ENCODE measurements at regions of chr12 and their contacts with region 1.

Region 1: DNA sequence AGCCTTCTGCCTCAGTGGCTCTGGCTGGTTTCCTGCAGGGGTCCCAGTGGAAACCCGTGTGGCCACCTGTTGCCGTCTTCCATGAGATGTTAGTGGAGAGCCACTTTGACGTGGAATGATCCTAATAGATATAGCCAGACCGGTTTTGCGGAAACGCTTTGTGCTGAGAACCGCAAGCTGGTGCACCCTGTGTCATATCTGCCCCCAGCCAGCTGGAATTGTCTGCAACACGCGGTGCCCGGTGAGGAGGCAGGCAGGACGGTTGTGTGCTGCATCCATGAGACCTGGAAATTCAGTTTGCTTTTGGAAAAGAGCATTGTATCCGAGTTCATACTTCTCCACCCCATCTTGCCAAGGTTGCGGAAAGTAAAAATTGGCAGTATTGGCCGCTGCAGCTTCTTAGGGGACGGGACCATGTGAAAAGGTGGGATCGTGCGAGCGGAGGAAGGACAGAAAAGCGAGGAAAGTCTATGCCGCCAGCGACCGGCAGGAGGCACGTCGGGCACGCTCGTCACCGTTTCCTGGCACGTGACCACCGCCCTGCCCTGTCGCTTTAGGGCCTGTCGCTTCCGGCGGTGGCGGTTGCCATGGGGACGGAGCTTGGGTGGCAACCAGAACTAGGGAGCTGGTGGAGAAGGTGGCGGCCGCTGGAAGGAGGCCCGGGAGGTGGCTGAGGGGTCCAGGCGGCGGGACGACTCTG is at the start of gene CFAP251:
- DNase-seq: peak; percentile 95 to 97 (median 97)
- H3K4me3 ChIP-seq: peak within 1 kb of the TSS in 6 of 7 experiments; percentile 48 to 72 (median 50)
- H3K27ac ChIP-seq: peak within 1 kb of the TSS; percentile 7 to 61
- H3K4me1 ChIP-seq: peaks cover 0 to 13% (median 12%) of the 10 kb centered on the region in 4 experiments
- H3K27me3 ChIP-seq: no peaks in the 10 kb centered on the region

Region 2: DNA sequence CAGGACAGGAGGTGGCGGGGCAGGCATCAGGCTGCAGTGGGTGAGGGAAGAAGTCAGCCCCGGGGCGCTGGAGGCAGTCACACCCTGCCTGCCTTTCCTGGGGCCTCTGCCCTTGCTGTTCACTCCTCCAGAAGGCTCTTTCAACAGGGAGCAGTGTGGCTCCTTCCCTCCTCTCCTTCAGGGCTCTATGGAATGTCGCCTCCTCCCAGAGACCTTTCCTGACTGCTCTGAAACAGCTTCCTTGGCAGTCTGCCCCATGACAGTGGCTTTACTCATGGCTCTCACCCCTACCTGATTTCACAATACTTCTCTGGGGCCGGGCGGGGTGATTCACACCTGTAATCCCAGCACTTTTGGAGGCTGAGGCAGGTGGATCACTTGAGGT is 131.7 kb before region 1 on chr12:
- CTCF ChIA-PET with region 1: no interaction called
- POLR2A ChIA-PET with region 1: no interaction called
- DNase-seq: no peak
- H3K4me3 ChIP-seq: no peak overlapping the region
- H3K27ac ChIP-seq: no peak overlapping the region
- H3K4me1 ChIP-seq: peaks cover 5 to 69% (median 65%) of the 10 kb centered on the region in 4 experiments
- H3K27me3 ChIP-seq: no peaks in the 10 kb centered on the region

Region 3: DNA sequence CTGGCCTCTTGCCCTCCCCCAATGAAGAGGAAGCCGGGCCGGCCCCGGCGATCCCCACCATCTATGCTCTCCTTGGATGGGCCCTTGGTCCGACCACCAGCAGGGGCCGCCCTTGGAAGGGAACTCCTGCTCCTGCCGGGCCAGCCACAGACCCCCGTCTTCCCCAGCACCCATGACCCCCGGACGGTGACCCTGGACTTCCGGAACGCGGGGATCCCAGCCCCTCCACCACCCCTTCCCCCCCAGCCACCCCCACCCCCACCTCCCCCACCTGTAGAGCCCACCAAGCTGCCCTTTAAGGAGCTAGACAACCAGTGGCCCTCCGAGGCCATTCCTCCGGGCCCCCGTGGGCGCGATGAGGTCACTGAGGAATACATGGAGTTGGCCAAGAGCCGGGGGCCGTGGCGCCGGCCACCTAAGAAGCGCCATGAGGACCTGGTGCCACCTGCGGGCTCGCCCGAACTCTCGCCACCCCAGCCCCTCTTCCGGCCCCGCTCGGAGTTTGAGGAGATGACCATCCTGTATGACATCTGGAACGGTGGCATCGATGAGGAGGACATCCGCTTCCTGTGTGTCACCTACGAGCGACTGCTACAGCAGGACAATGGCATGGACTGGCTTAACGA is 94.9 kb before region 1 on chr12:
- CTCF ChIA-PET with region 1: no interaction called
- POLR2A ChIA-PET with region 1: no interaction called
- DNase-seq: no peak
- H3K4me3 ChIP-seq: no peak overlapping the region
- H3K27ac ChIP-seq: no peak overlapping the region
- H3K4me1 ChIP-seq: no peaks in the 10 kb centered on the region
- H3K27me3 ChIP-seq: no peaks in the 10 kb centered on the region

Region 4: GRCh38 chr12:121992059-121992879 is 74.1 kb after region 1 on chr12:
- CTCF ChIA-PET with region 1: interaction called, 18 read pairs
- POLR2A ChIA-PET with region 1: no interaction called
- DNase-seq: peak; percentile 83 to 96 (median 94)
- H3K4me3 ChIP-seq: peak overlapping the region in 1 of 7 experiments; percentile 26
- H3K27ac ChIP-seq: peak overlapping the region; percentile 9 to 52
- H3K4me1 ChIP-seq: peaks cover 0 to 25% (median 21%) of the 10 kb centered on the region in 4 experiments
- H3K27me3 ChIP-seq: no peaks in the 10 kb centered on the region

Region 5: GRCh38 chr12:122021822-122022526 is 103.8 kb after region 1 on chr12 and contains the start of gene BCL7A:
- CTCF ChIA-PET with region 1: interaction called, 12 read pairs
- POLR2A ChIA-PET with region 1: interaction called, 7 read pairs
- DNase-seq: peak; percentile 78 to 93 (median 89)
- H3K4me3 ChIP-seq: peak within 1 kb of the TSS; percentile 63 to 86 (median 80)
- H3K27ac ChIP-seq: peak within 1 kb of the TSS in 1 of 2 experiments; percentile 76
- H3K4me1 ChIP-seq: peaks cover 0 to 27% (median 25%) of the 10 kb centered on the region in 4 experiments
- H3K27me3 ChIP-seq: no peaks in the 10 kb centered on the region